Naive thymus-derived CD4-positive, alpha-beta T cell (primary cell): ENCODE measurements at regions of chr17 and their contacts with region 1.

Region 1: GRCh38 chr17:41786227-41787020 is at the start of gene JUP:
- DNase-seq: peak; percentile 84 to 91 (median 89)
- ATAC-seq: peak; percentile 97
- H3K4me3 ChIP-seq: peak within 1 kb of the TSS; percentile 44
- H3K4me3 Mint-ChIP-seq: peak within 1 kb of the TSS; percentile 61 to 85 (median 82)
- H3K27ac ChIP-seq: no peak within 1 kb of the TSS
- H3K27ac Mint-ChIP-seq: peak within 1 kb of the TSS in 4 of 9 donors; percentile 1 to 70 (median 48)
- H3K4me1 ChIP-seq: peaks cover 0 to 11% of the 10 kb centered on the region in 2 donors
- H3K4me1 Mint-ChIP-seq: peaks cover 13 to 45% (median 30%) of the 10 kb centered on the region in 7 donors
- H3K27me3 ChIP-seq: peaks cover 0 to 6% of the 10 kb centered on the region in 2 donors
- H3K27me3 Mint-ChIP-seq: peaks cover 16 to 51% (median 20%) of the 10 kb centered on the region in 5 donors
- total RNA-seq, gene JUP: 0.24 to 8.2 (median 0.57) TPM

Region 2: GRCh38 chr17:41801374-41802271 is 15.2 kb after region 1 on chr17:
- CTCF ChIA-PET with region 1: interaction called, 10 read pairs
- POLR2A ChIA-PET with region 1: no interaction called
- intact Hi-C with region 1: no loop called
- DNase-seq: peak; percentile 45 to 78 (median 68)
- ATAC-seq: peak; percentile 91
- H3K4me3 ChIP-seq: no peak overlapping the region
- H3K4me3 Mint-ChIP-seq: no peak overlapping the region
- H3K27ac ChIP-seq: no peak overlapping the region
- H3K27ac Mint-ChIP-seq: no peak overlapping the region
- H3K4me1 ChIP-seq: peaks cover 0 to 3% of the 10 kb centered on the region in 2 donors
- H3K4me1 Mint-ChIP-seq: peaks cover 4 to 14% (median 5%) of the 10 kb centered on the region in 7 donors
- H3K27me3 ChIP-seq: no peaks in the 10 kb centered on the region
- H3K27me3 Mint-ChIP-seq: no peaks in the 10 kb centered on the region